Mammary epithelial cell (primary cell): ENCODE measurements at regions of chr13 and their contacts with region 1.

Region 1: GRCh38 chr13:80342471-80343380 is 1.8 kb upstream of the SPRY2 start:
- DNase-seq: peak; percentile 75
- H3K4me3 ChIP-seq: peak overlapping the region; percentile 45 to 90 (median 59)
- H3K27ac ChIP-seq: no peak overlapping the region
- H3K4me1 ChIP-seq: peaks cover 12% of the 10 kb centered on the region
- H3K27me3 ChIP-seq: no peaks in the 10 kb centered on the region
- CTCF ChIP-seq: peak; percentile 90 to 95

Region 2: GRCh38 chr13:79423801-79424642 is 918.7 kb before region 1 on chr13:
- CTCF ChIA-PET with region 1: no interaction called
- dilution Hi-C with region 1: no loop called
- in situ Hi-C with region 1: no loop called
- intact Hi-C with region 1: loop called (anchors 5 kb)
- DNase-seq: no peak
- H3K4me3 ChIP-seq: no peak overlapping the region
- H3K27ac ChIP-seq: no peak overlapping the region
- H3K4me1 ChIP-seq: no peaks in the 10 kb centered on the region
- H3K27me3 ChIP-seq: no peaks in the 10 kb centered on the region
- CTCF ChIP-seq: peak; percentile 59 to 67

Region 3: GRCh38 chr13:79679334-79679733 is 663.4 kb before region 1 on chr13:
- CTCF ChIA-PET with region 1: interaction called, 5 read pairs
- dilution Hi-C with region 1: no loop called
- in situ Hi-C with region 1: loop called in 1 of 2 experiments (anchors 25 kb)
- intact Hi-C with region 1: loop called (anchors 1 kb)
- DNase-seq: peak; percentile 58
- H3K4me3 ChIP-seq: no peak overlapping the region
- H3K27ac ChIP-seq: no peak overlapping the region
- H3K4me1 ChIP-seq: peaks cover 33% of the 10 kb centered on the region
- H3K27me3 ChIP-seq: no peaks in the 10 kb centered on the region
- CTCF ChIP-seq: peak; percentile 80 to 83

Region 4: GRCh38 chr13:79936368-79937136 is 406.2 kb before region 1 on chr13:
- CTCF ChIA-PET with region 1: no interaction called
- dilution Hi-C with region 1: no loop called
- in situ Hi-C with region 1: no loop called
- intact Hi-C with region 1: loop called (anchors 2 kb)
- DNase-seq: peak; percentile 98
- H3K4me3 ChIP-seq: no peak overlapping the region
- H3K27ac ChIP-seq: peak overlapping the region; percentile 89
- H3K4me1 ChIP-seq: peaks cover 40% of the 10 kb centered on the region
- H3K27me3 ChIP-seq: no peaks in the 10 kb centered on the region
- CTCF ChIP-seq: no peak

Region 5: DNA sequence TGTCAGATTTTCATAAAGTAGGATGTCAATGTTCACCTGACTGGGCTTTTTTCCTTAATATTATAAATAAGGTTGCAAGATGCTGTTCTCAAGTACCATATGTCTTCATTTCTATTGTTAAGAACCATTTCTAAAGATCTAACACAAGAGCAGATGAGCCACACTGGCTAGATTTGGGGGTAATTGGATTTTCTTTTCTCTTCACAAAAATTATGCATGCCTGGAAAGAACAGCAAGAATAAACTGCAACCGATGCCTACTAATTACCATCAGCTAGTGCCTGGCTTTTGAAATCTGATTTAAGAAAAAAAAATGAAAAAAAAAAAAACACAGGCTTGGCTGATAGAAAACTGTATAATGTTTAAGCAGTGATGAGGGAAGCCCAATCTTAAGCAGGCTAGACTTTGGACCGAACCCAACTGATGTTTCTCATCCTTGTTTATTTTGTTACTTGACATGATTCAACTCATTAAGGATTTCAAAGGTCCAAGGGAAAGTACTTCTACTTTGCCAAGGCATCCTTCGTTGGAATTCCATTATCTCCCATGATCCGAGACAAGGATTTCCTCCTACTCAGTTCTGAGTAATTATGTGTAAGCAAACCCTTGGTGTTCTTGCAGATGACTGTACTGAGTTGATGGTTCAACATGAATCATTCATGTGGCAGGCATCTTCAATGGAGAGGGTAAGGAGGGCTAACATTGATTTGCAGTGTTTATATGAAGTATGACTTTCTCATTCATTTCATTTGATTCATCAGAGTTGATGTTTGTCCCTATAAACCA is 302.3 kb before region 1 on chr13:
- CTCF ChIA-PET with region 1: no interaction called
- dilution Hi-C with region 1: no loop called
- in situ Hi-C with region 1: loop called (anchors 5 to 25 kb)
- intact Hi-C with region 1: loop called (anchors 2 kb)
- DNase-seq: peak; percentile 99
- H3K4me3 ChIP-seq: no peak overlapping the region
- H3K27ac ChIP-seq: peak overlapping the region; percentile 59
- H3K4me1 ChIP-seq: peaks cover 43% of the 10 kb centered on the region
- H3K27me3 ChIP-seq: no peaks in the 10 kb centered on the region
- CTCF ChIP-seq: no peak

Region 6: GRCh38 chr13:80571346-80572307 is 228.9 kb after region 1 on chr13:
- CTCF ChIA-PET with region 1: no interaction called
- dilution Hi-C with region 1: no loop called
- in situ Hi-C with region 1: no loop called
- intact Hi-C with region 1: loop called (anchors 2 kb)
- DNase-seq: no peak
- H3K4me3 ChIP-seq: no peak overlapping the region
- H3K27ac ChIP-seq: no peak overlapping the region
- H3K4me1 ChIP-seq: no peaks in the 10 kb centered on the region
- H3K27me3 ChIP-seq: no peaks in the 10 kb centered on the region
- CTCF ChIP-seq: no peak